ENCODE measurements at regions of chr2 and their contacts with region 1.

Region 1: GRCh38 chr2:134178241-134178877 is 75.5 kb upstream of the MGAT5 start:
- DNase-seq: peak; percentile 10
- H3K4me3 ChIP-seq: no peak overlapping the region
- H3K27ac ChIP-seq: peak overlapping the region; percentile 79
- H3K4me1 ChIP-seq: peaks cover 35% of the 10 kb centered on the region
- H3K27me3 ChIP-seq: no peaks in the 10 kb centered on the region
- CTCF ChIP-seq: no peak
- POLR2A ChIP-seq: no peak

Region 2: GRCh38 chr2:134137182-134137611 is 41.2 kb before region 1 on chr2:
- CTCF ChIA-PET with region 1: interaction called, 5 read pairs
- POLR2A ChIA-PET with region 1: no interaction called
- dilution Hi-C with region 1: no loop called
- intact Hi-C with region 1: loop called (anchors 1 kb)
- DNase-seq: peak; percentile 84
- H3K4me3 ChIP-seq: peak overlapping the region in 1 of 3 experiments; percentile 34
- H3K27ac ChIP-seq: peak overlapping the region; percentile 85
- H3K4me1 ChIP-seq: peaks cover 26% of the 10 kb centered on the region
- H3K27me3 ChIP-seq: no peaks in the 10 kb centered on the region
- CTCF ChIP-seq: no peak
- POLR2A ChIP-seq: no peak

Region 3: DNA sequence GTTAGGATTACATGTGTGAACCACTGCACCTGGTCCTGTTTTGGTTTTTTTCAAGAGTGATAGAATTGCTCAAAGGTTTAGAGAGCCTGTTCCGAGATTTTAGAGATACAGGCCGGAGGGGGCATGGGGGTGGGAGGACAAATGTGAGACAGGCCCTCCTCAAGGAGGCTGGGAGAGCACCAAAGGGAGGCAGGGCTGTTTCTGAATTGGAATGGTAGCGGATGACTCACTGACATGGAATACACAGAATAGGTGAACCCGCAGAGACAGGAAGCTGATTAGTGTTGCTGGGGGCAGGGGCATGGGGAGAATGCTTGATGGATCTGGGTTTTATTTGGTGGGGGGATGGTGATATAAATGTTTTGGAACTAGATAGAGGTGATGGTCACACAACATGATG is 35.5 kb before region 1 on chr2:
- CTCF ChIA-PET with region 1: interaction called, 3 read pairs
- POLR2A ChIA-PET with region 1: no interaction called
- dilution Hi-C with region 1: no loop called
- intact Hi-C with region 1: loop called (anchors 1 kb)
- DNase-seq: peak; percentile 37
- H3K4me3 ChIP-seq: no peak overlapping the region
- H3K27ac ChIP-seq: peak overlapping the region; percentile 46
- H3K4me1 ChIP-seq: peaks cover 30% of the 10 kb centered on the region
- H3K27me3 ChIP-seq: no peaks in the 10 kb centered on the region
- CTCF ChIP-seq: no peak
- POLR2A ChIP-seq: no peak

Region 4: DNA sequence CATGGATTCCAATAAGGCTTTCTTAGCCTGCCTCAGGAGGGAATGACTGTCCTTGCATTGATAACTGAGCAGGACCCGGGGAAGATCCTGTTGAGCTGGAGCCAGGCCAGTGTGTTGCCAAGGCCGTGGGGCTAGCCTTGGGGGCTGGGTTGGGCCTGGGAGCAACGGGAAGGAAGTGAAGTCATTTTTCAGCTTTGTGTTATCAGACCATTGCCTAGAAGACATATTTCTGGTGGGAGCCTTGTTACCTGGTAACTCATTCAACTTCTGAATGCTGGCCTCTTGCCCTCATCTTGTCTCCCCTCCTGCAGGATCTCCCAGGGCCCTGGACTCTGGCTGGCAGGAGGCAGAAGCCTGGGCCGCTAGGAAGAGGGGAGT is 17.2 kb before region 1 on chr2:
- CTCF ChIA-PET with region 1: interaction called, 4 read pairs
- POLR2A ChIA-PET with region 1: no interaction called
- dilution Hi-C with region 1: no loop called
- intact Hi-C with region 1: loop called (anchors 1 kb)
- DNase-seq: peak; percentile 77
- H3K4me3 ChIP-seq: no peak overlapping the region
- H3K27ac ChIP-seq: peak overlapping the region; percentile 90
- H3K4me1 ChIP-seq: peaks cover 19% of the 10 kb centered on the region
- H3K27me3 ChIP-seq: no peaks in the 10 kb centered on the region
- CTCF ChIP-seq: no peak
- POLR2A ChIP-seq: peak; percentile 39

Region 5: GRCh38 chr2:134301099-134301927 is 123.0 kb after region 1 on chr2:
- CTCF ChIA-PET with region 1: no interaction called
- POLR2A ChIA-PET with region 1: no interaction called
- dilution Hi-C with region 1: no loop called
- intact Hi-C with region 1: loop called (anchors 5 kb)
- DNase-seq: peak; percentile 81
- H3K4me3 ChIP-seq: peak overlapping the region in 1 of 3 experiments; percentile 16
- H3K27ac ChIP-seq: peak overlapping the region; percentile 78
- H3K4me1 ChIP-seq: peaks cover 47% of the 10 kb centered on the region
- H3K27me3 ChIP-seq: no peaks in the 10 kb centered on the region
- CTCF ChIP-seq: no peak
- POLR2A ChIP-seq: no peak

Measured in endothelial cell of umbilical vein (primary cell).